Endothelial cell of umbilical vein (primary cell): ENCODE measurements at regions of chr1 and their contacts with region 1.

Region 1: GRCh38 chr1:223712194-223712849 is at the start of gene CAPN2:
- DNase-seq: peak; percentile 83
- H3K4me3 ChIP-seq: peak within 1 kb of the TSS; percentile 85 to 97 (median 90)
- H3K27ac ChIP-seq: peak within 1 kb of the TSS; percentile 84
- H3K4me1 ChIP-seq: peaks cover 66% of the 10 kb centered on the region
- H3K27me3 ChIP-seq: no peaks in the 10 kb centered on the region
- CTCF ChIP-seq: peak; percentile 63
- POLR2A ChIP-seq: peak; percentile 93
- total RNA-seq, gene CAPN2: 316 and 420 TPM in 2 replicates

Region 2: GRCh38 chr1:222814536-222815439 is 897.5 kb before region 1 on chr1 and contains the start of gene DISP1:
- CTCF ChIA-PET with region 1: no interaction called
- POLR2A ChIA-PET with region 1: no interaction called
- dilution Hi-C with region 1: no loop called
- intact Hi-C with region 1: loop called (anchors 10 kb)
- DNase-seq: peak; percentile 65
- H3K4me3 ChIP-seq: peak within 1 kb of the TSS; percentile 41 to 84 (median 70)
- H3K27ac ChIP-seq: peak within 1 kb of the TSS; percentile 70
- H3K4me1 ChIP-seq: peaks cover 25% of the 10 kb centered on the region
- H3K27me3 ChIP-seq: no peaks in the 10 kb centered on the region
- CTCF ChIP-seq: no peak
- POLR2A ChIP-seq: peak; percentile 44
- total RNA-seq, gene DISP1: 2.4 and 3.9 TPM in 2 replicates

Region 3: GRCh38 chr1:223500560-223501425 is 211.5 kb before region 1 on chr1:
- CTCF ChIA-PET with region 1: no interaction called
- POLR2A ChIA-PET with region 1: no interaction called
- dilution Hi-C with region 1: no loop called
- intact Hi-C with region 1: no loop called
- DNase-seq: peak; percentile 55
- H3K4me3 ChIP-seq: no peak overlapping the region
- H3K27ac ChIP-seq: no peak overlapping the region
- H3K4me1 ChIP-seq: peaks cover 3% of the 10 kb centered on the region
- H3K27me3 ChIP-seq: no peaks in the 10 kb centered on the region
- CTCF ChIP-seq: no peak
- POLR2A ChIP-seq: no peak

Region 4: GRCh38 chr1:223628233-223629125 is 83.8 kb before region 1 on chr1:
- CTCF ChIA-PET with region 1: no interaction called
- POLR2A ChIA-PET with region 1: no interaction called
- dilution Hi-C with region 1: no loop called
- intact Hi-C with region 1: no loop called
- DNase-seq: no peak
- H3K4me3 ChIP-seq: no peak overlapping the region
- H3K27ac ChIP-seq: no peak overlapping the region
- H3K4me1 ChIP-seq: no peaks in the 10 kb centered on the region
- H3K27me3 ChIP-seq: peaks cover 0 to 2% of the 10 kb centered on the region in 2 experiments
- CTCF ChIP-seq: peak; percentile 35 to 37
- POLR2A ChIP-seq: no peak

Region 5: DNA sequence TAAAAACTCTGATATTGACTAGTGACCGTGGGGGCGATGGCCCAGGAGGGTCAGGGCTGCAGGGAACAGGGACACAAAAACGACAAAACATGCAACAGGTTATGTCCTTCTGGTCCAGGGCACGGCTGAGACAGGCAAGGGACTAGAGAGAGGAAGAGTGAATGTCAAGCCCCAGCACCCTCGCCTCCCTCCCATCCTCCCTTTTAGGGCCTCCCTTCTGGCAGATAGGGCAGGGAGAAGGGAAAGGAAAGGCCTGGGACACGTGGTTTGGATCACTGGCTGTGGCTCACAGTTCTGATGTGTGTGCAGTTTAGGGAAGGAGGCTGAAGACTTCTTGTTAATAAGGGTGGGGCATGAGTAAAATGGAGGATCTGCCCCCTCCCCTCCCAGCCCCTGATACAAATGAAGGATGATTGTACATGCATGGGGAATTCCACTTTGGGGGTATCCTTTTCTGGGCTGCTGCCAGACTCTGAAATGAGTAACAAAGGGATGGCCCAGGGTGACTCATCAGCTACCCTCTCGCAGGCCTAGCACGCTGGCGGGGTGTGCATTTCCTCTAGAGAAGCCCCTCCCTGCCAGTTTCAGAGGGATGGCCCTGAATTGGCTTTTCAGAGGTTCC is 14.2 kb after region 1 on chr1:
- CTCF ChIA-PET with region 1: interaction called, 17 read pairs
- POLR2A ChIA-PET with region 1: interaction called, 9 read pairs
- dilution Hi-C with region 1: no loop called
- intact Hi-C with region 1: loop called (anchors 1 kb)
- DNase-seq: peak; percentile 96
- H3K4me3 ChIP-seq: no peak overlapping the region
- H3K27ac ChIP-seq: peak overlapping the region; percentile 80
- H3K4me1 ChIP-seq: peaks cover 38% of the 10 kb centered on the region
- H3K27me3 ChIP-seq: no peaks in the 10 kb centered on the region
- CTCF ChIP-seq: no peak
- POLR2A ChIP-seq: no peak

Region 6: GRCh38 chr1:223748773-223749733 is 36.7 kb after region 1 on chr1:
- CTCF ChIA-PET with region 1: interaction called, 148 read pairs
- POLR2A ChIA-PET with region 1: interaction called, 3 read pairs
- dilution Hi-C with region 1: no loop called
- intact Hi-C with region 1: loop called (anchors 1 kb)
- DNase-seq: peak; percentile 62
- H3K4me3 ChIP-seq: peak overlapping the region in 1 of 3 experiments; percentile 15
- H3K27ac ChIP-seq: peak overlapping the region; percentile 10
- H3K4me1 ChIP-seq: peaks cover 24% of the 10 kb centered on the region
- H3K27me3 ChIP-seq: no peaks in the 10 kb centered on the region
- CTCF ChIP-seq: peak; percentile 89 to 93
- POLR2A ChIP-seq: no peak

Region 7: DNA sequence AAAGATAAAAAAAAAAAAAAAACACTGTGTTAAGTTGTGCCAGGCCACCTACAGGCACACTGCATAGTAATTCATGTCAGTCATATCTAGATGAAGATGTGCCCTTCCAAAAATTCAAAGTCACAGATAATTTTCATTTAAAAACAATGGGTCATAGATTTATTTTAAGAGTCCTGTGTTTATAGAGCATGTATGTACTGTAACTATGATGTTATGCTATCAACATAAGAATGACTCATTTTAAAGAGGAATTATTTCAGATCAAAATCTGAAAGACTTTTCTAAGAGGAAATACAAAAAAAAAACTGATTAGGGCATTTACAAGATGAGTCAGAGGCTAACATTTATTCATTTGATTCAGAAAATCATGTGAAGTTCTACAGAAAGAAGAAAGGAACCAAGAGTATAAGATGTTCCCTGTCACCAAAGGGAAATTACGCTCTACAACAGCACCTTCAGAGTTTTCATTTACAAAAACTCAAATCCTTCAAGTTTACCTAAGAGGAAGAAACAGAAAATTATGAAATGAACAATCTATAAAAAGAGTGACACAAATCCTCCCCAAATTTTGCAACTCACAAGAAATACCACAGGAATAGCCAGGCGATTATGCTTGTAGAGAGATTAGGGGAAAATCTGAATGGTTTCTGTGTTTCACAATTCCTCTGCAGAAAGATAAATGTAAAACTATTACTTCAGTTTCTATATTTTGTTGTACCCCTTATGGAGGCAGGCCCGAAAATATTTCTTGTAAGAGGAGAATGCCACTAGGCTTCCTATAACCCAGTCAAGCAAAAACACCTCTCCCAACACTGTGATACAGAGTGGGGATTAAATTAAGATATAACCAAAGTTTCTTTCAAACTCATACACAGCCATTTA is 119.7 kb after region 1 on chr1:
- CTCF ChIA-PET with region 1: no interaction called
- POLR2A ChIA-PET with region 1: no interaction called
- dilution Hi-C with region 1: no loop called
- intact Hi-C with region 1: loop called (anchors 5 kb)
- DNase-seq: peak; percentile 76
- H3K4me3 ChIP-seq: peak overlapping the region in 1 of 3 experiments; percentile 38
- H3K27ac ChIP-seq: peak overlapping the region; percentile 86
- H3K4me1 ChIP-seq: peaks cover 56% of the 10 kb centered on the region
- H3K27me3 ChIP-seq: no peaks in the 10 kb centered on the region
- CTCF ChIP-seq: no peak
- POLR2A ChIP-seq: no peak

Region 8: DNA sequence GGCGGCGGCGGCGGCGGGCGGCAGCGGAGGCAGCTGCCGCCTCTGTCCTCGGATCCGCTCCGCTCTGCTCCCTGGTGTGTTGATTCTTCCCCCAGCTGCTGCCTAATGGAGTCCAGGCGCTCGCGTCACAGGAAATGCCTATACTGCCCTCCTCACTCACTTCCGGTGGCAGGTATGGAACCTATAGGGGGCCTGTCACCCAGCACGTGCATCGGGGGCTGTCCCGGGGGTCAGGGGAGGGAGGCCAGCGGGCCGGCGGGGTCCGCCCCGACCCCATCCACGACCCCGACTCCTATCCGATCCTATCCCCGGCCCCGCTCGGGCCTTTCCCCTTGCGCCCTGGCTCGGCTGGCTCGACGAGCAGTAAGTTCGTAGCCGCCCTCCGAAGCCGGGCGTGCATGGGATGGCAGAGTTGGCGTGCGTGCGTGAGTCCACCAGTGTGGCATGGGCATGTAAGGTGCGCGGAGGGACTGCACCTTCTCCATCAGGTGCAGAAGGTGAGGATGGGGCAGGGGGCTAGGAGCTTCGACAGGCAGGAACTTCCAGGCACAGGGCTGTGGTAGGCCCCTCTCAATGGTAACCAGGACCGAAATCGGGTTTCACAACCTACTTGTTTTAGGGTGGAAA is 722.5 kb after region 1 on chr1 and contains the start of gene WDR26:
- CTCF ChIA-PET with region 1: no interaction called
- POLR2A ChIA-PET with region 1: no interaction called
- dilution Hi-C with region 1: no loop called
- intact Hi-C with region 1: loop called (anchors 5 kb)
- DNase-seq: peak; percentile 81
- H3K4me3 ChIP-seq: peak within 1 kb of the TSS; percentile 24 to 100 (median 88)
- H3K27ac ChIP-seq: peak within 1 kb of the TSS; percentile 69
- H3K4me1 ChIP-seq: peaks cover 36% of the 10 kb centered on the region
- H3K27me3 ChIP-seq: no peaks in the 10 kb centered on the region
- CTCF ChIP-seq: peak in 1 of 2 donors; percentile 3
- POLR2A ChIP-seq: peak; percentile 88
- total RNA-seq, gene WDR26: 90.1 and 92.4 TPM in 2 replicates

Region 9: GRCh38 chr1:225182716-225183115 is 1470.4 kb after region 1 on chr1:
- CTCF ChIA-PET with region 1: no interaction called
- POLR2A ChIA-PET with region 1: no interaction called
- dilution Hi-C with region 1: no loop called
- intact Hi-C with region 1: no loop called
- DNase-seq: no peak
- H3K4me3 ChIP-seq: no peak overlapping the region
- H3K27ac ChIP-seq: no peak overlapping the region
- H3K4me1 ChIP-seq: no peaks in the 10 kb centered on the region
- H3K27me3 ChIP-seq: no peaks in the 10 kb centered on the region
- CTCF ChIP-seq: no peak
- POLR2A ChIP-seq: no peak